ENCODE measurements at regions of chr12 and their contacts with region 1.

Region 1: DNA sequence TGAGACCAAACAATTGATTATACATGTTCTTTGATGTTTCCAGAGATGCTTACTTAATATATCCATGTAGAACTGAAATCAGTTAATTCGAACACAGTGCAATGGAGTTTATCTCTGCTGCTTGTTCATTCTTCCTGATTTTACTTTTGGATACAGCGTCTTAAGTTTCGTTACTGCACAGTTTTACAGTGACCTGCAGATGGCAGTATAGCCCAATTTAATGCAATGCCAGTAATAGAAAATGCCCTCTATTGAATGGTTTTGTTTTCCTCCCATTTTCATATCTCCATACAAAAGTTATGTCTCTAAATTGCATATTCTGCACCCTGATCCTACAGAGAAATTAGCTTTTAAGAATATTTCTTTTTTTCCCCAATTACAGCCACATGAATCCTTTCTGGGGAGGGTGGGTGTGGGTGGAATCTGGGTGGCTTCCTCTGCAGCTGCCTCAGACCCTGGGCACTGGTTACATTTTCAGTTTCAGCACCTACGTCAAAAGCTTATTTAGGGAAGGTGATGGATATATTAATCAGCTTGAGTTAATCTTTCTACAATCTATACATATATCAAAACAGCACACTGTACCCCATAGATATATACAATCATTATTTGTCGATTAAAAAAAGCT is 101.1 kb upstream of the DCD start:
- DNase-seq: peak; percentile 37
- ATAC-seq: peak; percentile 81
- H3K4me3 ChIP-seq: no peak overlapping the region
- H3K27ac ChIP-seq: no peak overlapping the region
- H3K4me1 ChIP-seq: no peaks in the 10 kb centered on the region
- H3K27me3 ChIP-seq: peaks cover 42% of the 10 kb centered on the region
- CTCF ChIP-seq: peak; percentile 76 to 87 (median 83)
- POLR2A ChIP-seq: no peak
- RAD21 ChIP-seq: peak; percentile 77

Region 2: GRCh38 chr12:54711664-54712063 is 37.6 kb before region 1 on chr12:
- CTCF ChIA-PET with region 1: no interaction called
- POLR2A ChIA-PET with region 1: no interaction called
- RAD21 ChIA-PET with region 1: no interaction called
- intact Hi-C with region 1: no loop called
- DNase-seq: no peak
- ATAC-seq: no peak
- H3K4me3 ChIP-seq: no peak overlapping the region
- H3K27ac ChIP-seq: no peak overlapping the region
- H3K4me1 ChIP-seq: no peaks in the 10 kb centered on the region
- H3K27me3 ChIP-seq: peaks cover 65% of the 10 kb centered on the region
- CTCF ChIP-seq: no peak
- POLR2A ChIP-seq: no peak
- RAD21 ChIP-seq: no peak

Region 3: DNA sequence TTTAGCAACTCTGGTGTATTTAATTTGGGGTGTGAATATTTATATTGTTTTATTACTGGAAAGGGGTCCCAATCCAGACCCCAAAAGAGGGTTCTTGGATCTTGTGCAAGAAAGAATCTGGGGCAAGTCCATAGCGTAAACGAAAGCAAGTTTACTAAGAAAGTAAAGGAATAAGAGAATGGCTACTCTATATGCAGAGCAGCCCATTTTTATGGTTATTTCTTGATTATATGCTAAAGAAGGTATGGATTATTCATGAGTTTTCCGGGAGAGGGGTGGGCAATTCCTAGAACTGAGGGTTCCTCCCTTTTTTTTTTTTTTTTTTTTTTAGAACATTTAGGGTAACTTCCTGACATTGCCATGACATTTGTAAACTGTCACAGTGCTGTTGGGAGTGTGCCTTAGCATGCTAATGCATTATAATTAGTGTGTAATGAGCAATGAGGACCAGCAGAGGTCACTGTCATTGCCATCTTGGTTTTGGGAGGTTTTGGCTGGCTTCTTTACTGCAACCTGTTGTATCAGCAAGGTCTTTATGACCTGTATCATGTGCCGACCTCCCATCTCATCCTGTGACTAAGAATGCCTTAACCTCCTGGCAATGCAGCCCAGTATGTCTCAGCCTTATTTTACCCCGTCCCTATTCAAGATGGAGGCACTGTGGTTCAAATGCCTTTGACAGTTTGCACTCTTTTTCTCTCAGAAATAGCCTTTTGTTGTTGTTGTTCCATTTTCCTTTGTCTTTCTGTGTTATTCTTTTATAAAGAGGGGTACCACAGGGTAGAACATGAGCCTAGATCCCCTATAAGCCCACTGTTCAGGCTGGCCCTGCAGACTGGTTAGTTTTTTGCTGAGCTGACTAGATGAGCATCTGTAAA is 25.7 kb before region 1 on chr12:
- CTCF ChIA-PET with region 1: interaction called, 11 read pairs
- POLR2A ChIA-PET with region 1: no interaction called
- RAD21 ChIA-PET with region 1: no interaction called
- intact Hi-C with region 1: no loop called
- DNase-seq: peak; percentile 13
- ATAC-seq: peak; percentile 74
- H3K4me3 ChIP-seq: no peak overlapping the region
- H3K27ac ChIP-seq: no peak overlapping the region
- H3K4me1 ChIP-seq: no peaks in the 10 kb centered on the region
- H3K27me3 ChIP-seq: peaks cover 43% of the 10 kb centered on the region
- CTCF ChIP-seq: peak; percentile 7 to 66 (median 62); a peak in 4 of 6 replicates
- POLR2A ChIP-seq: no peak
- RAD21 ChIP-seq: no peak

Region 4: GRCh38 chr12:54853995-54854566 is 104.8 kb after region 1 on chr12 and contains the start of gene MUCL1:
- CTCF ChIA-PET with region 1: no interaction called
- POLR2A ChIA-PET with region 1: no interaction called
- RAD21 ChIA-PET with region 1: no interaction called
- intact Hi-C with region 1: loop called (anchors 1 kb)
- DNase-seq: peak; percentile 62
- ATAC-seq: peak; percentile 100
- H3K4me3 ChIP-seq: no peak within 1 kb of the TSS
- H3K27ac ChIP-seq: no peak within 1 kb of the TSS
- H3K4me1 ChIP-seq: no peaks in the 10 kb centered on the region
- H3K27me3 ChIP-seq: peaks cover 30% of the 10 kb centered on the region
- CTCF ChIP-seq: peak; percentile 77 to 92 (median 84); a peak in 5 of 6 replicates
- POLR2A ChIP-seq: no peak
- RAD21 ChIP-seq: peak; percentile 87
- total RNA-seq, gene MUCL1: not detected

Region 5: GRCh38 chr12:54958048-54958658 is 208.8 kb after region 1 on chr12:
- CTCF ChIA-PET with region 1: interaction called, 34 read pairs
- POLR2A ChIA-PET with region 1: no interaction called
- RAD21 ChIA-PET with region 1: no interaction called
- intact Hi-C with region 1: loop called (anchors 1 kb)
- DNase-seq: peak; percentile 53
- ATAC-seq: peak; percentile 76
- H3K4me3 ChIP-seq: no peak overlapping the region
- H3K27ac ChIP-seq: no peak overlapping the region
- H3K4me1 ChIP-seq: no peaks in the 10 kb centered on the region
- H3K27me3 ChIP-seq: peaks cover 85% of the 10 kb centered on the region
- CTCF ChIP-seq: peak; percentile 53 to 82 (median 76)
- POLR2A ChIP-seq: no peak
- RAD21 ChIP-seq: peak; percentile 93

Region 6: GRCh38 chr12:54993161-54993835 is 244.0 kb after region 1 on chr12:
- CTCF ChIA-PET with region 1: interaction called, 16 read pairs
- POLR2A ChIA-PET with region 1: no interaction called
- RAD21 ChIA-PET with region 1: no interaction called
- intact Hi-C with region 1: no loop called
- DNase-seq: peak; percentile 74
- ATAC-seq: peak; percentile 97
- H3K4me3 ChIP-seq: no peak overlapping the region
- H3K27ac ChIP-seq: no peak overlapping the region
- H3K4me1 ChIP-seq: peaks cover 0 to 2% of the 10 kb centered on the region in 2 experiments; a peak in 1 of 4 replicates
- H3K27me3 ChIP-seq: peaks cover 65% of the 10 kb centered on the region
- CTCF ChIP-seq: peak; percentile 75 to 90 (median 88)
- POLR2A ChIP-seq: no peak
- RAD21 ChIP-seq: peak; percentile 85

Region 7: DNA sequence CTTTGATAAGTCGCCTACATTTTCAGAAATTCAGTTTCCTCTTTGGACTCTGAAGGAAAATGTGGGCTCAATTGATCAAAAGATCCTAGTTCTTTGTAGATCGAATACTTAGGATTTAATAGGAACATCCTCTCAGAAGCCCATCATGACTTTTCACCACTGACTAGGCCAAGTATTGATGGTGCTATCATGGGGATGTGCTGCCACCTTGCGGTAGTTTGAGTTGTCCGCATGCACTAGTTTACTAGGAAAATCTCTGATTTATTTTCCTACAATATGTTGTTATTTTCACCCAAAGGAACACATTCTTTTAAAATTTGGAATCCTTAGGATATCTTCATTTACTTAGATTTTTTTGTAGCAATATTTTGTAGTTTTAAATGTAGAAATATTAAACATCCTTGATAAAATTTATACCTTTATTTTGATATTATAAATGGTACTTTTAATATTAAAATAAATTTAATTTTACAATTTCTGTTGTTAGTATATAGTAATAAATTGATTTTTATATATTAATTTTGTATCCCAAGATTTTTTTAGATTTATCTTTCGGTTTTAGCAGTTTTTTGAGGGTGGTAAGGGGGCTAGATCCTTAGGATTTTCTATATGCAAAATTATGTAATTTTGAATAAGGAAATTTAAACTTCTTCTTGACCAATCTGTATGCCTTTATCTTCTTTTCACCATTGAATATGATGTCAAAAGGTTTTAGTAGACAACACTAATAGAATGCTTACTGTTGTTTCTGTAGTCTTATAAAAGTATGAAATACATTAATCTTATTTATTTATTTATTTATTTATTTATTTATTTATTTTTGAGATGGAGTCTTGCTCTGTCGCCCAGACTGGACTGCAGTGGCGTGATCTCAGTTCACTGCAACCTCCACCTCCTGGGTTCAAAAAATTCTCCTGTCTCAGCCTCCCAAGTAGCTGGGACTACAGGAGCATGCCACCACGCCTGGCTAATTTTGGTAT is 324.0 kb after region 1 on chr12:
- CTCF ChIA-PET with region 1: interaction called, 19 read pairs
- POLR2A ChIA-PET with region 1: no interaction called
- RAD21 ChIA-PET with region 1: interaction called in 1 of 2 experiments, 3 read pairs
- intact Hi-C with region 1: no loop called
- DNase-seq: peak; percentile 66
- ATAC-seq: 0 out of 2 replicates have a peak, but pooled peaks have one; percentile 35
- H3K4me3 ChIP-seq: no peak overlapping the region
- H3K27ac ChIP-seq: no peak overlapping the region
- H3K4me1 ChIP-seq: no peaks in the 10 kb centered on the region
- H3K27me3 ChIP-seq: peaks cover 17% of the 10 kb centered on the region
- CTCF ChIP-seq: peak; percentile 71 to 87 (median 79)
- POLR2A ChIP-seq: no peak
- RAD21 ChIP-seq: peak; percentile 84